Activated CD4-positive, alpha-beta T cell treated with anti-CD3 and anti-CD28 coated beads, Interleukin-2, amount 10 ng/mL, durations not matched to agents 24 days and 14 days (primary cell): ENCODE measurements at regions of chr10 and their contacts with region 1.

Region 1: DNA sequence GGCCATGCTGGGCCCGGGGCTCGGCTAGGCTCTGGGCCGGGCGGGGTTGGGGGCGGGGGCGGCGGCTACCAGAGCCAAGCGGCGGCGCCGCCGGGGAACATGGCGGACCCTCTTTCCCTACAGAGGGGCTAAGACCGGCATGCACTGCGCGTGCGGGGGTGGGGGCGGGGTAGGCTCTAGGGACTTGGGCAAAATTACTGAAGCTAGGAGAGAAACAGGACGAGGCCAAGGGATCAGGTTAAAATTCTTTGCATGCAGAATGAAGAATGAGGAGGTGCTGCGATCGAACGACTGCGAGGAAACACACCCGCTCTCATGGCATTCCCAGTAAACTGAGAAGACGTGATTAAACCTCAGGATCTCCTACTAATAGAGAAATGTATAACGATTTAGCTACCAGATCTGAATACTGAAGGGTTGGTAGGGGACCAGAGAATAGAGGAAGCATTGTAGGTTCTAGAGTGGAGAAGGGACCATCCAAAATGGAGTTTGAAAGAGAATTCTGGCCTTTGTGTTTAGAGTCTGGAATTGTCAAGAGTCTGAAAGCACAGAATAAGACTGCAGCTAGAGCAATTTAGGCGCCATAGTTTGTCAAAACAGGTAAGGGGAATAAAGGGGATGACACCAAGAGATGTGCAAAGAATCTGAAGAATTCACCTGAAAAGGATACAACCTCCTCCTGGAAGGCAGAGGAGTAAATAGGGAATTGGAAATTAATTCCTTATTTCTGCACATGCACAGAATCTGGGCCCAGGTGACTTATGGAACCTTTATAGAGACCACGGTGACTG is at the start of gene PPP3CB:
- DNase-seq: peak; percentile 93
- H3K4me3 Mint-ChIP-seq: peak within 1 kb of the TSS; percentile 99
- H3K27ac Mint-ChIP-seq: peak within 1 kb of the TSS; percentile 99
- H3K4me1 Mint-ChIP-seq: peaks cover 38% of the 10 kb centered on the region
- H3K27me3 Mint-ChIP-seq: no peaks in the 10 kb centered on the region
- total RNA-seq, gene PPP3CB: 42.5 and 43.6 TPM in 2 replicates

Region 2: GRCh38 chr10:73358331-73359279 is 137.5 kb before region 1 on chr10 and contains the start of gene CFAP70:
- intact Hi-C with region 1: loop called (anchors 1 kb)
- DNase-seq: peak; percentile 98
- H3K4me3 Mint-ChIP-seq: peak within 1 kb of the TSS; percentile 93
- H3K27ac Mint-ChIP-seq: peak within 1 kb of the TSS; percentile 89
- H3K4me1 Mint-ChIP-seq: peaks cover 16% of the 10 kb centered on the region
- H3K27me3 Mint-ChIP-seq: peaks cover 15% of the 10 kb centered on the region
- total RNA-seq, gene CFAP70: 0.17 and 0.33 TPM in 2 replicates

Region 3: GRCh38 chr10:73406846-73407245 is 89.2 kb before region 1 on chr10:
- intact Hi-C with region 1: no loop called
- DNase-seq: no peak
- H3K4me3 Mint-ChIP-seq: no peak overlapping the region
- H3K27ac Mint-ChIP-seq: no peak overlapping the region
- H3K4me1 Mint-ChIP-seq: peaks cover 26% of the 10 kb centered on the region
- H3K27me3 Mint-ChIP-seq: no peaks in the 10 kb centered on the region

Region 4: DNA sequence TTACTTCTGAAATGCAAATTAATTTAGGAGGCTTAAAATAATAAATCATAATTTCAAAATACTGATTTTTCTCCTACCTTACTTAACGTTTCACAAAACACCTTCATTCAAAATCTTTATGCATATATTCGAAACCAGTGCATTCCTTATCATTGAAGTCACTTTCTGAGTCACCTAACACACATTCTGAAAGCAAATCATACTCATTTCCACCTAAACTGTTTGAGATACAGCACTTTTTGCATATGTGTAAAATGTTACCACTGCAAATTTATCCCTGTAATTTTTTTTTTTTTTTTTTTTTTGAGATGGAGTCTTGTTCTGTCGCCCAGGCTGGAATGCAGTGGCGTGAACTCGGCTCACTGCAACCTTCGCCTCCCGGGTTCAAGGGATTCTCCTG is 15.9 kb before region 1 on chr10:
- intact Hi-C with region 1: loop called (anchors 1 kb)
- DNase-seq: no peak
- H3K4me3 Mint-ChIP-seq: no peak overlapping the region
- H3K27ac Mint-ChIP-seq: no peak overlapping the region
- H3K4me1 Mint-ChIP-seq: peaks cover 14% of the 10 kb centered on the region
- H3K27me3 Mint-ChIP-seq: no peaks in the 10 kb centered on the region

Region 5: GRCh38 chr10:73517271-73517877 is 21.3 kb after region 1 on chr10:
- intact Hi-C with region 1: no loop called
- DNase-seq: no peak
- H3K4me3 Mint-ChIP-seq: no peak overlapping the region
- H3K27ac Mint-ChIP-seq: no peak overlapping the region
- H3K4me1 Mint-ChIP-seq: peaks cover 5% of the 10 kb centered on the region
- H3K27me3 Mint-ChIP-seq: no peaks in the 10 kb centered on the region

Region 6: GRCh38 chr10:73730153-73730906 is 234.3 kb after region 1 on chr10:
- intact Hi-C with region 1: loop called (anchors 1 kb)
- DNase-seq: peak; percentile 99
- H3K4me3 Mint-ChIP-seq: peak overlapping the region; percentile 100
- H3K27ac Mint-ChIP-seq: peak overlapping the region; percentile 99
- H3K4me1 Mint-ChIP-seq: peaks cover 4% of the 10 kb centered on the region
- H3K27me3 Mint-ChIP-seq: no peaks in the 10 kb centered on the region